ENCODE measurements at regions of chr7 and their contacts with region 1.

Region 1: GRCh38 chr7:134690016-134690415 is 43.4 kb downstream of the BPGM start:
- DNase-seq: no peak
- H3K4me3 ChIP-seq: no peak overlapping the region
- H3K27ac ChIP-seq: no peak overlapping the region
- H3K4me1 ChIP-seq: peaks cover 39% of the 10 kb centered on the region
- H3K27me3 ChIP-seq: no peaks in the 10 kb centered on the region
- CTCF ChIP-seq: peak; percentile 32 to 50

Region 2: GRCh38 chr7:134058980-134059379 is 631.0 kb before region 1 on chr7:
- CTCF ChIA-PET with region 1: no interaction called
- dilution Hi-C with region 1: no loop called
- in situ Hi-C with region 1: no loop called
- intact Hi-C with region 1: no loop called
- DNase-seq: no peak
- H3K4me3 ChIP-seq: no peak overlapping the region
- H3K27ac ChIP-seq: no peak overlapping the region
- H3K4me1 ChIP-seq: no peaks in the 10 kb centered on the region
- H3K27me3 ChIP-seq: no peaks in the 10 kb centered on the region
- CTCF ChIP-seq: no peak

Region 3: GRCh38 chr7:134585897-134586296 is 104.1 kb before region 1 on chr7:
- CTCF ChIA-PET with region 1: no interaction called
- dilution Hi-C with region 1: no loop called
- in situ Hi-C with region 1: no loop called
- intact Hi-C with region 1: no loop called
- DNase-seq: no peak
- H3K4me3 ChIP-seq: no peak overlapping the region
- H3K27ac ChIP-seq: no peak overlapping the region
- H3K4me1 ChIP-seq: peaks cover 13% of the 10 kb centered on the region
- H3K27me3 ChIP-seq: no peaks in the 10 kb centered on the region
- CTCF ChIP-seq: no peak

Region 4: DNA sequence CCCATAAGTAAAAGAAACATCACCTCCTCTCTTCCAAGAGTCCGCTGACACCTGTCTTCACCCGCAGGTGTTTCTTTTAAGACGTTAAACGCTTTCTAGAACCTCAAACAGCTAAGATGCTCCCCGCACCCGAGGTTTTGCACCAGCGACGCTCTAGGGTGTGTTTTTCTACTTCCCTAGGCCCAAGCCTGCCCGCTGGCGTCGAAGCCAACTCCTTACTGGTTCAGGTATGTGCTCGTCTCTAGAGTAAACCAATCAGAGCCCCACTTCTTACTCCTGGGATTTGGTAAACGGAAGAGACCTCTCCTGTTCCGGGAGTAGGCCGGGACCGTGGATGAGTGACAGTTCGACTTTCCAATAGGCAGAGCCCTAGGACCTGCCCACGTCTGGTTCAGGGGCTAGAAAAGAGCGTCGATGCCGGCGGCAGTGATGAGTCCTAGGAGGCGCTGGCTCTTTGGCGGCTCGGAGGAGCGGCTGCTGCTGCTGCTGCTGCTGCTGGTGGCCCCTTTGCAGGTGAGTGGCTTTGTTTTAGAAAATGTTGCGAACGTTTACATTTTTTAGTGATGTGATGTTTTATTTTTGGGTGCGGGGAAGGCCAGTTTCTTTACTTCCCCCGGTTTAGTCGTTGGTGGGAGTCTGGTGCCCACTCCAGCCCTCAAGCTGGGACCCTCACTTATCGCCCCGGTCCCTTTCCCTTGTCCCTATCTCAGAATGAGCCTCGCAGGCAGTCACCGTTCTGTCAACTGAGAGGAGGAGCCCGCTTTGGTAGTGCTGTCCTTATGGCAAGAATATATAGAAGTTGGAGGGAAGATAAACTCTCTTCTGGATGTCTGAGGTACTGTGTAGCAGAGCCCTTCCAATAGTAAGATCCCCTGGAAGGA is 43.4 kb before region 1 on chr7 and contains the start of gene BPGM:
- CTCF ChIA-PET with region 1: no interaction called
- dilution Hi-C with region 1: no loop called
- in situ Hi-C with region 1: no loop called
- intact Hi-C with region 1: loop called (anchors 5 kb)
- DNase-seq: peak; percentile 100
- H3K4me3 ChIP-seq: peak within 1 kb of the TSS; percentile 87 to 92 (median 92)
- H3K27ac ChIP-seq: peak within 1 kb of the TSS; percentile 83
- H3K4me1 ChIP-seq: peaks cover 14% of the 10 kb centered on the region
- H3K27me3 ChIP-seq: no peaks in the 10 kb centered on the region
- CTCF ChIP-seq: peak; percentile 9 to 26
- total RNA-seq, gene BPGM: 21.3 to 55.2 TPM

Region 5: GRCh38 chr7:134778941-134779740 is 89.1 kb after region 1 on chr7 and contains the start of gene CALD1:
- CTCF ChIA-PET with region 1: no interaction called
- dilution Hi-C with region 1: no loop called
- in situ Hi-C with region 1: no loop called
- intact Hi-C with region 1: loop called (anchors 2 kb)
- DNase-seq: peak; percentile 99
- H3K4me3 ChIP-seq: peak within 1 kb of the TSS; percentile 60 to 86 (median 78)
- H3K27ac ChIP-seq: peak within 1 kb of the TSS; percentile 88
- H3K4me1 ChIP-seq: peaks cover 37% of the 10 kb centered on the region
- H3K27me3 ChIP-seq: no peaks in the 10 kb centered on the region
- CTCF ChIP-seq: no peak
- total RNA-seq, gene CALD1: 251 to 445 TPM

Region 6: GRCh38 chr7:134905375-134905774 is 215.4 kb after region 1 on chr7:
- CTCF ChIA-PET with region 1: no interaction called
- dilution Hi-C with region 1: no loop called
- in situ Hi-C with region 1: no loop called
- intact Hi-C with region 1: loop called (anchors 1 kb)
- DNase-seq: peak; percentile 82
- H3K4me3 ChIP-seq: no peak overlapping the region
- H3K27ac ChIP-seq: peak overlapping the region; percentile 11
- H3K4me1 ChIP-seq: peaks cover 49% of the 10 kb centered on the region
- H3K27me3 ChIP-seq: no peaks in the 10 kb centered on the region
- CTCF ChIP-seq: peak; percentile 24 to 27

Region 7: DNA sequence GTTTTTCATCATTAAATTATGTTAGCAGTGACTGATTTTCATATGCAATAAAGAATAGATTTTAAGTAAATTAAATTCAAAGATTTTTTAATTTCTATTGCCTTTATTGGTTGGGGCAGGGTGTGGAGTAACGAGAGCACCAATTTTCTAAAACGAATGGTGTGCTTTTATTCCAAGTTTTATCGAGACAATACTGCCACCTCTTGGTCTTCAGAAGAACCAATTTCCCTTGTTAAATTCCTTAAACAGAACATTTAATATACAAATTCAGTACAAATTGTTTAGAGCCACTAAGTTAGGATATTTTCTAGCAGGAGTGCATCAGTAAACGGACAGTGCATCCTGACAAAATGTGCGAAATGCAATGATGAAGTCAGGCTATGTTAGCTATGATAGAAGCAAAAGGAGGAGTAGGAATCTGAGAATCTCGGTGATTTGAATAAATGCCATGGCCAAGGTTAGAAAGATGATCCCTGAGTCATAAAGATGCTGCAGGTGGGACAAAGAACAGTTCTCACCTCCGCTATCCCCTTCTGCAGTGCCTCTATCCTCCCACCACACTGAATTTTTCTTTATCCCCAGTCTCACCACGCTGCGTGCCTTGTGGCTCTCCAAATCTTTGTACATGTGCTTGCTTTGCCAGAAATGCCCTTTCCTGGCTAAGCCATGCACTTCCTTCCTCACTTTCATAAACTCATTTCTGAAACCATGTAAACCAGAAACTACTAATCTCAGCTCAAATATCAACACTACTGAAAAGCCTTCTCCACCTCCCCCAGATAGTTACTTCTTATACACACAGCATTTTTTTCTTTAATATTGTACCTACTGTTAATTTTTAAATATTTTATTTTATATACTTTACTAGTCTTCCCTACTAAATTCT is 264.4 kb after region 1 on chr7:
- CTCF ChIA-PET with region 1: no interaction called
- dilution Hi-C with region 1: no loop called
- in situ Hi-C with region 1: loop called in 1 of 2 experiments (anchors 25 kb)
- intact Hi-C with region 1: loop called (anchors 2 kb)
- DNase-seq: no peak
- H3K4me3 ChIP-seq: no peak overlapping the region
- H3K27ac ChIP-seq: no peak overlapping the region
- H3K4me1 ChIP-seq: no peaks in the 10 kb centered on the region
- H3K27me3 ChIP-seq: no peaks in the 10 kb centered on the region
- CTCF ChIP-seq: peak; percentile 34 to 47

Region 8: DNA sequence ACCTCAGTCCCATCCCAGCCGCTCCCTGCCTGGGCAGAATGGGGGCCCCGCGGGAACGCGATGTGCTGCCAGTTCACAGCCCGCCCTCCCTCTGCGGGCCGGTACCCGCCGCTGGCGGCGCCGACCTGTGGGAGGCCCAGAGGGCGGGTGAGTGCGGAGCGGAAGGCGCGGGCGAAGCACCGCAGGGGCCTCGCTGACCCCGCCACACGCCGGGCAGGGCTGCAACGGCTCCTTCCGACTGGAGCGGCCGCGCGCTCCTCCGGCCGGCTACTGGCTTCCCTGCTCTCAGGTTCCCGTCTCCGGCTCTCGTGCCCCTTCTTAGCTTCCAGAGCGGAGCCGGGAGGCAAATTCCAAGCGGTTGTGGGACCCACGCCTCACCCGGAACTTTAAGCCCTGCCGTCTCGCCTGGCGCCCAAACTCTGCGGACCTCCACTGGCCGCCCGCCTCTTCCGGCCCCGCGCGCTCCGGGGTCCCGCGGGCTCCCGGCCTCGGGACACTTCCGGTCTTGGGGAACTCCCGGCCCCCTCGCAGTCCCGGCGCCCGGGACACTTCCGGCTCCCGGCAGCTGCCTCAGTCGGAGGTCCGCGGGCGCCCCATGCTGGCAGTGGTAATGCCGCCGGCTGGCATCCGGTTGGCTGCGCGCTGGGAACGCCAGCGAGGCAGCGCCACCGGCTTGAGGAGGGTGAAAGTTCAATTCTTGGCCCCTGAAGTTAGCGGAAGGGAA is 480.4 kb after region 1 on chr7 and contains the start of gene CYREN:
- CTCF ChIA-PET with region 1: no interaction called
- dilution Hi-C with region 1: no loop called
- in situ Hi-C with region 1: no loop called
- intact Hi-C with region 1: loop called (anchors 1 kb)
- DNase-seq: peak; percentile 94
- H3K4me3 ChIP-seq: peak within 1 kb of the TSS; percentile 52 to 83 (median 79)
- H3K27ac ChIP-seq: peak within 1 kb of the TSS; percentile 91
- H3K4me1 ChIP-seq: peaks cover 31% of the 10 kb centered on the region
- H3K27me3 ChIP-seq: no peaks in the 10 kb centered on the region
- CTCF ChIP-seq: peak; percentile 26 to 75
- total RNA-seq, gene CYREN: 45.2 to 55.8 TPM

Region 9: DNA sequence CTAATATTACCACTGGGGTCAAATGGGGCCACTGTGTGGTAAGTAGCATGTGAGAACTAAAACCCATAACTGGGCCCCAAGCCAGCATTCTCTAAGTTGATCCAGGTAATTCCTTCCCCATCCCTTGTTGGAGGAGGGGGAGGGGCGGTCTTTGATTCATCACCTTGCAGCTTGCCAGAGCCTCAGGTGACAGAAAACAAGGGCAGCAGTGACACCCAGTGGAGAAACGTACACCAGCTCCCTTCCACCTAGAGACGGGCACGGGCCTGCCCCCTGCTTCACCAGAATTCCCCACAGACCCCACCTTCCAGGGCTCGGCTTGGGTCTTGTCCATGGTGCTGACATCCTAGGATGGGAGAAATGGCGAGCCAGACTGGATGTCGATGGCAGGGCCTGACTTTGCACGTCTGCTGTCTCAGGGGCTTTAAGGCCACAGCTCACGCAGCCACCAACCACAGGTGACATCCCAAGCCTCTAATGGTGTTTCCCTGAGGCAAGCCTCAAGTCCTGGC is 645.7 kb after region 1 on chr7:
- CTCF ChIA-PET with region 1: interaction called, 6 read pairs
- dilution Hi-C with region 1: no loop called
- in situ Hi-C with region 1: no loop called
- intact Hi-C with region 1: loop called (anchors 5 kb)
- DNase-seq: peak; percentile 98
- H3K4me3 ChIP-seq: no peak overlapping the region
- H3K27ac ChIP-seq: no peak overlapping the region
- H3K4me1 ChIP-seq: peaks cover 22% of the 10 kb centered on the region
- H3K27me3 ChIP-seq: no peaks in the 10 kb centered on the region
- CTCF ChIP-seq: peak; percentile 85 to 90

Measured in mammary epithelial cell (primary cell).